ENCODE measurements at regions of chr2 and their contacts with region 1.

Region 1: DNA sequence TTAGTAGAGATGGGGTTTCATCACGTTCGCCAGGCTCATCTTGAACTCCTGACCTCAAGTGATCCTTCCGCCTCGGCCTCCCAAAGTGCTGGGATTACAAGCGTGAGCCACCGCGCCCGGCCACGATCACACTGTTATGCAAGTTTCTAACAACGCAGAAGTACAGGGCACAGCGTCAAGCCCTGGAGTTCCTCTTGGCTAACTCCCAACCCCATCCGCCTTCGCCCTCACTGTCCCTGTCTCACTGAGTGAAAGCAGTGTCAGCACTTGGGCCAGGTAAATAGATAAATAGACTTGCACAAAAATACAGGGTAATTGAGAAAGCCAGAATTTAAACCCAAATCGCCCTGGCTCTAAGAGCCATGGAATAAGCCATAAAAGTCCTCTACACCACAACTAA is 111.7 kb downstream of the ACVR1 start:
- DNase-seq: no peak
- H3K4me3 ChIP-seq: no peak overlapping the region
- H3K27ac ChIP-seq: no peak overlapping the region
- H3K4me1 ChIP-seq: no peaks in the 10 kb centered on the region
- H3K27me3 ChIP-seq: no peaks in the 10 kb centered on the region
- CTCF ChIP-seq: no peak
- EP300 ChIP-seq: no peak
- POLR2A ChIP-seq: no peak

Region 2: GRCh38 chr2:157784169-157784822 is 19.9 kb after region 1 on chr2:
- in situ Hi-C with region 1: no loop called
- intact Hi-C with region 1: loop called (anchors 2 kb)
- DNase-seq: peak; percentile 77
- H3K4me3 ChIP-seq: peak overlapping the region in 2 of 4 donors; percentile 13 to 29
- H3K27ac ChIP-seq: peak overlapping the region; percentile 77 to 83 (median 80)
- H3K4me1 ChIP-seq: peaks cover 20 to 56% (median 35%) of the 10 kb centered on the region in 4 donors
- H3K27me3 ChIP-seq: no peaks in the 10 kb centered on the region
- CTCF ChIP-seq: no peak
- EP300 ChIP-seq: no peak
- POLR2A ChIP-seq: peak; percentile 71

Region 3: GRCh38 chr2:157849591-157849990 is 85.2 kb after region 1 on chr2:
- in situ Hi-C with region 1: no loop called
- intact Hi-C with region 1: no loop called
- DNase-seq: no peak
- H3K4me3 ChIP-seq: no peak overlapping the region
- H3K27ac ChIP-seq: no peak overlapping the region
- H3K4me1 ChIP-seq: no peaks in the 10 kb centered on the region
- H3K27me3 ChIP-seq: no peaks in the 10 kb centered on the region
- CTCF ChIP-seq: no peak
- EP300 ChIP-seq: no peak
- POLR2A ChIP-seq: no peak